Heart left ventricle (tissue), 16 donors: ENCODE measurements at regions of chr1 and their contacts with region 1.

Region 1: GRCh38 chr1:168637350-168637991 is 61.1 kb downstream of the XCL1 start:
- DNase-seq: no peak
- ATAC-seq: peak in 3 of 4 donors; percentile 35 to 66 (median 61)
- H3K4me3 ChIP-seq: no peak overlapping the region
- H3K27ac ChIP-seq: peak overlapping the region in 10 of 12 donors; percentile 27 to 82 (median 52)
- H3K4me1 ChIP-seq: peaks cover 0 to 15% (median 3%) of the 10 kb centered on the region in 12 donors
- H3K27me3 ChIP-seq: no peaks in the 10 kb centered on the region
- CTCF ChIP-seq: peak; percentile 35 to 65 (median 54)
- POLR2A ChIP-seq: no peak

Region 2: DNA sequence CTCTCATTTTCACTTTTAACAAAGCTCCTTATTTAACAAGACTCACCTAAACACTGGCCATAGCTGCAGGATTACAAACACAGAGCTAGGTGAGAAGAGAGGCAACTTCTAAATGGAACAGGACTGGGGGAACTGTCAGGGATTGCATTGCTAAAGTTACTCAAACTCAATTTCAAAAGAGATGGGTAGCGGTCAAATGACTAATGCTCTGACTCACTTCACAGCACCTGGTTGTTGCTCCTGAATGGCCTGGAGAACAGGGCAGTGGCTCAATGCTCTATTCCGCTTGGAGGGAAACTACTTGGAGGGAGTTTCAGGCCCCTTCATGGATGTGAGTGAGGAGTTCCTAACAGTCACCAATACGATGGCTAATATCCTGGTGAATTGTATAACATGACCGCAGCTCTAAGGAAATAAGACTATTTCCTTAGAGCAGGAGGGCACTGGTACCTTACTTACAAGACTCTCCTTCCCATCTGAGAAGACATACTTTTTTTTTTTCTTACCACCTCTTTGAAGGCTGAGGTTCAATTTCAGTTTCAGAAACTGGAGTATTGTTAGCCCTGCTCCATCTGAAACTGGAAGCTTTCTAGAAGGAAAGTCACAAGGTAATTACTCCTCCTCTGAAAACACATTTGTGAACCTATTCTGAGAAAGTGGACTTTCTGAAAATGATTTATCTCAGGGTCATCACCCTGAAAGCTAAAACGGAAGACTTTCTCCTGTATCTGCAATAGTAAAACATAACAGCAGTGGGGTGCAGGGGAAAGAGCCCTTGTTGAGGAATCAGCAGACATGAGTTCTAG is 82.0 kb after region 1 on chr1:
- intact Hi-C with region 1: loop called in 3 of 10 experiments (anchors 5 to 10 kb)
- DNase-seq: no peak
- ATAC-seq: no peak
- H3K4me3 ChIP-seq: no peak overlapping the region
- H3K27ac ChIP-seq: no peak overlapping the region
- H3K4me1 ChIP-seq: peaks cover 0 to 39% (median 5%) of the 10 kb centered on the region in 12 donors
- H3K27me3 ChIP-seq: no peaks in the 10 kb centered on the region
- CTCF ChIP-seq: no peak
- POLR2A ChIP-seq: no peak

Region 3: GRCh38 chr1:168774241-168774640 is 136.8 kb after region 1 on chr1:
- intact Hi-C with region 1: loop called in 1 of 10 experiments (anchors 5 kb)
- DNase-seq: peak; percentile 61 to 83 (median 67)
- ATAC-seq: peak; percentile 85 to 99 (median 98)
- H3K4me3 ChIP-seq: no peak overlapping the region
- H3K27ac ChIP-seq: peak overlapping the region in 2 of 12 donors; percentile 28 to 30
- H3K4me1 ChIP-seq: peaks cover 0 to 21% (median 1%) of the 10 kb centered on the region in 12 donors
- H3K27me3 ChIP-seq: no peaks in the 10 kb centered on the region
- CTCF ChIP-seq: peak in 1 of 12 donors; percentile 3
- POLR2A ChIP-seq: no peak

Region 4: GRCh38 chr1:169115891-169116585 is 478.6 kb after region 1 on chr1:
- intact Hi-C with region 1: loop called in 1 of 10 experiments (anchors 2 kb)
- DNase-seq: peak in 4 of 5 donors; percentile 58 to 80 (median 70)
- ATAC-seq: peak; percentile 44 to 81 (median 77)
- H3K4me3 ChIP-seq: peak overlapping the region in 2 of 12 donors; percentile 6 to 19
- H3K27ac ChIP-seq: peak overlapping the region in 11 of 12 donors; percentile 54 to 97 (median 76)
- H3K4me1 ChIP-seq: peaks cover 0 to 94% (median 46%) of the 10 kb centered on the region in 12 donors
- H3K27me3 ChIP-seq: no peaks in the 10 kb centered on the region
- CTCF ChIP-seq: no peak
- POLR2A ChIP-seq: no peak

Region 5: DNA sequence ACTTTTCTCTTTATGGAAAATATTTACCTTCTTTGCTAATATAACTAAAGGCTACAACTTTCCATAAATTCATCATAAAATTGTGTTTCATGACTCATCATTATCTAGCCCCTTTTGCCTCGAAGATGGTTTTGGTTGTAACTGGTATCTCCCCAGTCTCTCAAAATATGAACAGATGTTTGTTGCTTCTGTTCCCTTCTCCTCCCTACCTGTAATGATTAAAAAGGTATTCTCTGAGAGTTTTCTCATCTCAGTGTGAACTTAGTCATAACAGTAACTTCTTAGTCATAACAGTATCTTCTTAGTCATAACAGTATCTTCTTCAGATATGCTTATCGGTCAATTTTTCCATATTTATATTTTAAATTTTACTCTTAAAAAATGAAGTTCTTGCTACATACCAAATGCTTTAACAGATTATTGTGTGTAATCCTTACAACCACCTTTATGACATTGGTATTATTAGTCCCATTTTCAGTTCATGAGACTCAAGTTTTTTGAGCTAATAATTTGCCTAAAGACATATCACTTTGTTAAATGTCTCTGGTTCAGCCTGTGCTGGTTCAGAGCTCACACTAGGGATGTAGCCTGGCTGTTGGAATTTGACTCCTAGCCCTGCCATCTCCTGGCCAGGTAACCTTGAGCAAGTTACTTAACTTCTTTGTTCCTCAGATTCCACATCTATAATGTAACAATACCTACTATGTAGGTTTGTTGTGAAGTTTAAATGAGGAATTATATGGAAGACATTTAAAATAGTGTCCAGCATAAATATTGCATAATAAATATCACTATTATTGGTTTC is 501.6 kb after region 1 on chr1:
- intact Hi-C with region 1: loop called in 2 of 10 experiments (anchors 5 to 10 kb)
- DNase-seq: no peak
- ATAC-seq: no peak
- H3K4me3 ChIP-seq: no peak overlapping the region
- H3K27ac ChIP-seq: no peak overlapping the region
- H3K4me1 ChIP-seq: peaks cover 0 to 7% (median 0%) of the 10 kb centered on the region in 12 donors
- H3K27me3 ChIP-seq: no peaks in the 10 kb centered on the region
- CTCF ChIP-seq: no peak
- POLR2A ChIP-seq: no peak

Region 6: GRCh38 chr1:169348383-169349036 is 711.0 kb after region 1 on chr1:
- intact Hi-C with region 1: loop called in 1 of 10 experiments (anchors 10 kb)
- DNase-seq: peak in 1 of 5 donors; percentile 11
- ATAC-seq: peak in 2 of 4 donors; percentile 34 to 42
- H3K4me3 ChIP-seq: no peak overlapping the region
- H3K27ac ChIP-seq: no peak overlapping the region
- H3K4me1 ChIP-seq: no peaks in the 10 kb centered on the region
- H3K27me3 ChIP-seq: no peaks in the 10 kb centered on the region
- CTCF ChIP-seq: peak; percentile 73 to 88 (median 82)
- POLR2A ChIP-seq: no peak